ENCODE measurements at regions of chr16 and their contacts with region 1.

Region 1: DNA sequence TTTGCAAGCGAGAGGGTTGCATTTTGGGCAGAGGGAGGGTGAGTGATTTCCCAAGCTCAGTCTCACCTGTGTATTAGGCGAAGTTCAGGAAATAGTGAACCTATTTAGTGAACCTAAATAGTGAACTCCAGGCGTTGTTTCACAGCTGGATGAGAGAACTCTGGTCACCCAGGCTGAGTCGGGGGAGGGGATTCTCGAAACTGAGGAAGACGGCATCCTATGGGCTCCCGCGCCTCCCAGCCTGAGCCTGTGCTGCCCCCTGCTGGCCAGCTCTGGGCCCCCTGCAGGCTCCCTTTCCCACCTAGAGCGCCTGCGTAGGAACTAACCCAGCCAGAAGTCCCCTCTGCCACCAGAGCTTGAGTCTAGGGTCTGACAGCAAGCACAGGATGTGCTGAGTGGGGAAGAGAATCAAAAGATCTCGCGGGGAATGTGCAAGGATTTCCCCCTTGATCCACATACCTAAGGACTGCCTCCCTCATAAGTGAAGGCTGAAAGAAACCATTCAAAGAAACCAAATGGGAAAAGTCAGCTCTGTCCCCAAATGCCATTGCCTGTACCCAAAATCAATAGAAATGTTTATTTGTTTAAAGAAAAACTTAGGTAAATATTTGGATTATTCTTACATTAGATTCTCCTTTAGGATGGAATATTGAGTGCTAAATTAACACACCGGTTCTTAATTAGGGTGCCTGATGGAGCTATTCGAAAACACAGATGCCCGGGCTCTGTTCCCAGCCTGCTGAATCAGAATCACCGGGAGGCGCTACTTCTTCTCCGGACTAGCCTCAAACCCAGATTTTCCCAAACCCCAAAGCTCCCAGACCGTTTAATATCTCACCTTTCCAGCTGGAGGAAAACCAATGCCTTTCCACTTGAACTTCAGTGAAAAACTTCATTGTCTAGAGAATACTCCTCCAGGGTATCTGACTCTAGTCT is 14.8 kb upstream of the MARVELD3 start:
- DNase-seq: peak; percentile 90
- ATAC-seq: peak; percentile 84
- H3K4me3 Mint-ChIP-seq: no peak overlapping the region
- H3K27ac Mint-ChIP-seq: no peak overlapping the region
- H3K4me1 Mint-ChIP-seq: peaks cover 14% of the 10 kb centered on the region
- H3K27me3 Mint-ChIP-seq: peaks cover 13% of the 10 kb centered on the region

Region 2: GRCh38 chr16:71412270-71413160 is 198.7 kb before region 1 on chr16:
- CTCF ChIA-PET with region 1: interaction called, 16 read pairs
- POLR2A ChIA-PET with region 1: no interaction called
- intact Hi-C with region 1: loop called (anchors 1 to 2 kb)
- DNase-seq: peak; percentile 82
- ATAC-seq: peak; percentile 85
- H3K4me3 Mint-ChIP-seq: no peak overlapping the region
- H3K27ac Mint-ChIP-seq: no peak overlapping the region
- H3K4me1 Mint-ChIP-seq: no peaks in the 10 kb centered on the region
- H3K27me3 Mint-ChIP-seq: peaks cover 32% of the 10 kb centered on the region

Region 3: GRCh38 chr16:71461686-71462648 is 149.2 kb before region 1 on chr16 and contains the start of gene ZNF23:
- CTCF ChIA-PET with region 1: interaction called, 10 read pairs
- POLR2A ChIA-PET with region 1: no interaction called
- intact Hi-C with region 1: no loop called
- DNase-seq: peak; percentile 88
- ATAC-seq: peak; percentile 96
- H3K4me3 Mint-ChIP-seq: peak within 1 kb of the TSS; percentile 76
- H3K27ac Mint-ChIP-seq: peak within 1 kb of the TSS; percentile 96
- H3K4me1 Mint-ChIP-seq: peaks cover 19% of the 10 kb centered on the region
- H3K27me3 Mint-ChIP-seq: no peaks in the 10 kb centered on the region
- total RNA-seq, gene ZNF23: 9.6 to 10.9 TPM

Region 4: GRCh38 chr16:71537643-71538042 is 73.6 kb before region 1 on chr16:
- CTCF ChIA-PET with region 1: interaction called, 35 read pairs
- POLR2A ChIA-PET with region 1: no interaction called
- intact Hi-C with region 1: loop called in 1 of 2 experiments (anchors 1 kb)
- DNase-seq: peak; percentile 71
- ATAC-seq: peak; percentile 58
- H3K4me3 Mint-ChIP-seq: no peak overlapping the region
- H3K27ac Mint-ChIP-seq: no peak overlapping the region
- H3K4me1 Mint-ChIP-seq: peaks cover 2% of the 10 kb centered on the region
- H3K27me3 Mint-ChIP-seq: peaks cover 6% of the 10 kb centered on the region

Region 5: DNA sequence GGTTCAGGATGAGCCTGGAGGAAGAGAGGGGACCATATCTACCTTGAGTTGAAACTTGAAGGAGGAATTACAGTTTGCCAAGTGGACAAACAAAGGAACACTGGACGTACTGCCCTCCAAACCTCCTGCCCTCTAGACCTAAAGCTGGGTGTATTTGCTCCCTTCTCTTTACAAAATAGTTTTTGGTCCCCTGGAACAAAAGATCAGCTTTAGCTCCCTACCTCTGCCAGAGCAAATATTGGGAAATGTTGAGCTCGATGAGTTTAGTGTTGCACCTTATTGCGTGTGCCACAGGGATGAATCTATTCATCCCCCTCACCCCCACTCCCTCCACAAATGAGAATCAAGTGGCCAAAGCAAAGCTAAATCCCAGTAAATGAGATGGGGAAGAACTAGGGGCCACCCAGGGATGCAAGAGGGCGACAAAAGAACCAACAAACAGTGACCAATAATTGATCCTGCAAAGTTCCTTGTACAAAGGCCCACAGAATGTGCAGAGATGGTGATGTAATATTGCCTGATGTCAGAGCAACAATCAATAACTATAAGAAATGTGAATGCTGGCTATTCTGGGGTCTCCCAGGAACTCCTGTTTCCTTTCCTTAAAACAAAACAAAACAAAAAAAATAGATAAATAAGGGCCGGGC is 17.1 kb before region 1 on chr16:
- CTCF ChIA-PET with region 1: interaction called, 24 read pairs
- POLR2A ChIA-PET with region 1: no interaction called
- intact Hi-C with region 1: no loop called
- DNase-seq: no peak
- ATAC-seq: no peak
- H3K4me3 Mint-ChIP-seq: no peak overlapping the region
- H3K27ac Mint-ChIP-seq: no peak overlapping the region
- H3K4me1 Mint-ChIP-seq: no peaks in the 10 kb centered on the region
- H3K27me3 Mint-ChIP-seq: peaks cover 36% of the 10 kb centered on the region

Region 6: GRCh38 chr16:71628810-71629209 is 17.6 kb after region 1 on chr16:
- CTCF ChIA-PET with region 1: interaction called, 15 read pairs
- POLR2A ChIA-PET with region 1: no interaction called
- intact Hi-C with region 1: no loop called
- DNase-seq: no peak
- ATAC-seq: no peak
- H3K4me3 Mint-ChIP-seq: no peak overlapping the region
- H3K27ac Mint-ChIP-seq: no peak overlapping the region
- H3K4me1 Mint-ChIP-seq: peaks cover 2% of the 10 kb centered on the region
- H3K27me3 Mint-ChIP-seq: peaks cover 20% of the 10 kb centered on the region

Region 7: DNA sequence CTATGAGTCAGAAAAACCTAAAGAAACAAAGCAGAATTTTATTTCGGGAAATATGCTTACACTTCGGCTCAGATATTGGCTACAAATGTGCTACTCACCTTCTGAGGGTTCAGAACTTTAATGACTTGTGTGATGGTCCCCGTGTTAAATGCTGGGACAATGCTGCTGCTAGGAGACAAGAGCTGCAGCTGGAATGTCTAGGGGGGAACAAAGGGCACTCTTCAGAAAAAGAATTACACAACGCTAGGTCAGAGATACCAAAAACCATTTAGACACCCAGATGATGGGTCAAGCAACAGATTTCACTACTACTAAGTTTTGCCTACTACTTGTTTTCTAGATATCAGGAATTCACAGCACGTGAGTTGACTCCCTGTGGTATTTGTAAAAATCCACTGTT is 123.3 kb after region 1 on chr16:
- CTCF ChIA-PET with region 1: no interaction called
- POLR2A ChIA-PET with region 1: no interaction called
- intact Hi-C with region 1: no loop called
- DNase-seq: no peak
- ATAC-seq: no peak
- H3K4me3 Mint-ChIP-seq: no peak overlapping the region
- H3K27ac Mint-ChIP-seq: no peak overlapping the region
- H3K4me1 Mint-ChIP-seq: peaks cover 1% of the 10 kb centered on the region
- H3K27me3 Mint-ChIP-seq: no peaks in the 10 kb centered on the region

Region 8: DNA sequence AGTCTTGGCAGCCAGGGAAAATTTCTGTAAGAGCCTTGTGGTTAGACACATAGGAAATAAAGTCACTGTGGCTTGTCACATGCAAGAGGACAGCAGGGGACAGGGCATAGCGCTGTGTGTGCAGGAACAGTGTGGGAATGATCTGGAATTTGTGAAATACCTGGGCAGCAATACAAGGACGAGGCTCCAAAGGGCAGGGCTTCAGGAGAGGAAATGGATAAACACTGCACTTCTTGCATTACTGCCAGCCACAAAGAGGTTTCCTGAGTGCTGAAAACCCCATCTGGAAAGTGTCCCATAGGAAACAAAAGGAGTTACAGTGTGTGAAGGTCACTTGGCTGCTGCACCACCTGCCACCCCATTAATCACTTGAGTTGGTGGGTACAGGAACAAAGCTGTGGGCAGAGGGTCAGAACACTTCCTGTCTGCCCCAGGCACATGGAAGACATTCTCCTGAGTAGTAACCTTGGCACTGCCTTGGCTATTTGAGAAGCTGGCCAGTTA is 431.0 kb after region 1 on chr16:
- CTCF ChIA-PET with region 1: no interaction called
- POLR2A ChIA-PET with region 1: no interaction called
- intact Hi-C with region 1: no loop called
- DNase-seq: no peak
- ATAC-seq: no peak
- H3K4me3 Mint-ChIP-seq: no peak overlapping the region
- H3K27ac Mint-ChIP-seq: no peak overlapping the region
- H3K4me1 Mint-ChIP-seq: no peaks in the 10 kb centered on the region
- H3K27me3 Mint-ChIP-seq: no peaks in the 10 kb centered on the region